Ovary (tissue), 10 donors: ENCODE measurements at regions of chr3 and their contacts with region 1.

Region 1: DNA sequence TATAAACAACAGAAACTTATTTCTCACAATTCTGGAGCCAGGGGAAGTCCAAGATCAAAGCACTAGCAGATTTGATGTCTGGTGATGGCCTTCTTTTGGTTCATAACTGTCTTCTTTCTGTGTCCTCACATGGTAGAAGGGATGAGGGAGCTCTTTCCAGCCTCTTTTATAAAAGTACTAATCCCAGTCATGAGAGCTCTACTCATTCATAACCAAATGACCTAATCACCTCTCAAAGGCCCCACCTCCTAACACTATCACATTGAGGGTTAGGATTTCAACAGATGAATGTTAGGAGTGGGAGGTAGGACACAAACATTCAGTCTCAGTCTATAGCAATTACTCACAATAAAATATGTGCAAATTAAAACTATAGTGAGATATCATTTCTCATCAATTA is 50.1 kb upstream of the UBE2E2 start:
- DNase-seq: no peak
- H3K4me3 ChIP-seq: no peak overlapping the region
- H3K27ac ChIP-seq: no peak overlapping the region
- H3K4me1 ChIP-seq: no peaks in the 10 kb centered on the region
- H3K27me3 ChIP-seq: no peaks in the 10 kb centered on the region
- CTCF ChIP-seq: no peak
- EP300 ChIP-seq: no peak
- POLR2A ChIP-seq: no peak

Region 2: GRCh38 chr3:23085261-23085660 is 67.7 kb before region 1 on chr3:
- intact Hi-C with region 1: no loop called
- DNase-seq: no peak
- H3K4me3 ChIP-seq: no peak overlapping the region
- H3K27ac ChIP-seq: no peak overlapping the region
- H3K4me1 ChIP-seq: peaks cover 1% of the 10 kb centered on the region
- H3K27me3 ChIP-seq: no peaks in the 10 kb centered on the region
- CTCF ChIP-seq: no peak
- EP300 ChIP-seq: no peak
- POLR2A ChIP-seq: no peak

Region 3: DNA sequence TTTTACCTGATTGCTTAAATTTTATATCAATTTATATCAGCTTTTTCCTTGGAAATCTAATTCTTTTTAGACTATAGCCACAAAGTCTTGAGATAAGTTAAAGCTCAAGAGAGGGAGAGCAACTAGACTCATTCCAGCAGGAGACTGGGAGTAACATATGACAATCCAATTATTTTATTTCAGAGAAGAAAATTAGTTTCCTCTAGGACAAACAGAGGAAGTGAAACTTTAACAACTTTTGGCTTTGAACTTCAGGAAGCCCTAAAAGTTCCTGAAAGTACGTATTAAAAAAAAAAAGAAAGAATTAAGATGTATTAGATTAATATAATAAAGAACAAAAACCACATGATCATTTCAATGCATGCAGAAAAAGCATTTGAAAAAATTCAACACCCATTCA is 36.2 kb after region 1 on chr3:
- intact Hi-C with region 1: loop called in 1 of 4 experiments (anchors 1 kb)
- DNase-seq: no peak
- H3K4me3 ChIP-seq: no peak overlapping the region
- H3K27ac ChIP-seq: no peak overlapping the region
- H3K4me1 ChIP-seq: no peaks in the 10 kb centered on the region
- H3K27me3 ChIP-seq: no peaks in the 10 kb centered on the region
- CTCF ChIP-seq: no peak
- EP300 ChIP-seq: no peak
- POLR2A ChIP-seq: no peak